GM12878 (cell line): ENCODE measurements at regions of chr12 and their contacts with region 1.

Region 1: DNA sequence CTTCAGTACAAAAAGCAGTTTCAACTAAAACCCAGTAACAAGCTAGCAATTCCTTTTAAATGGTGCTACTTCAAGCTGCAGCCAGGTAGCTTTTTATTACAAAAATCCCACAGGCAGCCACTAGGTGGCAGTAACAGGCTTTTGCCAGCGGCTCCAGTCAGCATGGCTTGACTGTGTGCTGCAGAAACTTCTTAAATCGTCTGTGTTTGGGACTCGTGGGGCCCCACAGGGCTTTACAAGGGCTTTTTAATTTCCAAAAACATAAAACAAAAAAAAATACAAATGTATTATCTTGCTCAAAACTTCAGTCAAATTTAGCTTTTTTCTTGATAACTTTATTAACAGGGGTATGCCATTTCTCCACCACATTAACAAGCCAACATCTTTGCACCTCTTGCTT is 3.6 kb upstream of the CLEC4E start:
- DNase-seq: peak; percentile 40
- ATAC-seq: peak; percentile 93
- H3K4me3 ChIP-seq: no peak overlapping the region
- H3K27ac ChIP-seq: no peak overlapping the region
- H3K4me1 ChIP-seq: no peaks in the 10 kb centered on the region
- H3K27me3 ChIP-seq: no peaks in the 10 kb centered on the region
- CTCF ChIP-seq: peak; percentile 74 to 87 (median 86)
- EP300 ChIP-seq: no peak
- POLR2A ChIP-seq: no peak
- RAD21 ChIP-seq: peak; percentile 93

Region 2: DNA sequence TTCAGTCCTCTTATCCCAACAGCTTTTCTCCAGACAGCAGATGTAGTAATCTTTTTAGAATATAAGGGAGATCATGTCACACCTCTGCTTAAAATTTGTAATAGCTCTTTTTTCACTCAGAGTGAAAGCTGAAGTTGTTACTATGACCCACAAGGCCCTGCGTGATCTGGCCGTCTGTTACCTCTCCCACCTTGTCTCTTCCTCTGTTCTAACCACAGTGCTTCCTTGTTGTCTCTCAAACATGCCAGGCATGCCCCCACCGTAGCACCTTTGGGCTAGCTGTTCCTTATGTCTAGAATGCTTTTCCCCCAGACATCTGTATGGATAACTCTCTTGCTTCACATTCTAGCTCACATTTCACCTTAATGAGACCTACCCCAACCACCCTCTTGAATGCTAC is 455.7 kb before region 1 on chr12:
- CTCF ChIA-PET with region 1: no interaction called
- POLR2A ChIA-PET with region 1: no interaction called
- RAD21 ChIA-PET with region 1: no interaction called
- SMC1A ChIA-PET with region 1: no interaction called
- in situ Hi-C with region 1: no loop called
- intact Hi-C with region 1: no loop called
- DNase-seq: no peak
- ATAC-seq: peak; percentile 84
- H3K4me3 ChIP-seq: peak overlapping the region; percentile 43
- H3K27ac ChIP-seq: peak overlapping the region; percentile 70
- H3K4me1 ChIP-seq: peaks cover 12% of the 10 kb centered on the region
- H3K27me3 ChIP-seq: no peaks in the 10 kb centered on the region
- CTCF ChIP-seq: no peak
- EP300 ChIP-seq: no peak
- POLR2A ChIP-seq: no peak
- RAD21 ChIP-seq: no peak

Region 3: GRCh38 chr12:8577879-8578278 is 33.6 kb after region 1 on chr12:
- CTCF ChIA-PET with region 1: interaction called, 11 read pairs
- POLR2A ChIA-PET with region 1: interaction called, 3 read pairs
- RAD21 ChIA-PET with region 1: no interaction called
- SMC1A ChIA-PET with region 1: interaction called, 5 read pairs
- in situ Hi-C with region 1: no loop called
- intact Hi-C with region 1: no loop called
- DNase-seq: no peak
- ATAC-seq: no peak
- H3K4me3 ChIP-seq: no peak overlapping the region
- H3K27ac ChIP-seq: no peak overlapping the region
- H3K4me1 ChIP-seq: no peaks in the 10 kb centered on the region
- H3K27me3 ChIP-seq: no peaks in the 10 kb centered on the region; a peak in 1 of 4 replicates
- CTCF ChIP-seq: no peak
- EP300 ChIP-seq: no peak
- POLR2A ChIP-seq: no peak
- RAD21 ChIP-seq: no peak

Region 4: GRCh38 chr12:8629486-8630033 is 85.3 kb after region 1 on chr12:
- CTCF ChIA-PET with region 1: interaction called, 22 read pairs
- POLR2A ChIA-PET with region 1: no interaction called
- RAD21 ChIA-PET with region 1: interaction called, 5 read pairs
- SMC1A ChIA-PET with region 1: interaction called, 13 read pairs
- in situ Hi-C with region 1: no loop called
- intact Hi-C with region 1: no loop called
- DNase-seq: peak; percentile 98
- ATAC-seq: peak; percentile 96
- H3K4me3 ChIP-seq: no peak overlapping the region
- H3K27ac ChIP-seq: peak overlapping the region; percentile 75
- H3K4me1 ChIP-seq: peaks cover 18% of the 10 kb centered on the region
- H3K27me3 ChIP-seq: no peaks in the 10 kb centered on the region
- CTCF ChIP-seq: no peak
- EP300 ChIP-seq: peak; percentile 91 to 98
- POLR2A ChIP-seq: no peak
- RAD21 ChIP-seq: peak; percentile 3; the same call in 1 of the 2 replicates

Region 5: GRCh38 chr12:8662593-8662992 is 118.3 kb after region 1 on chr12 and contains the start of gene MFAP5:
- CTCF ChIA-PET with region 1: interaction called, 46 read pairs
- POLR2A ChIA-PET with region 1: no interaction called
- RAD21 ChIA-PET with region 1: interaction called, 29 read pairs
- SMC1A ChIA-PET with region 1: interaction called, 30 read pairs
- in situ Hi-C with region 1: no loop called
- intact Hi-C with region 1: no loop called
- DNase-seq: no peak
- ATAC-seq: no peak
- H3K4me3 ChIP-seq: no peak within 1 kb of the TSS
- H3K27ac ChIP-seq: no peak within 1 kb of the TSS
- H3K4me1 ChIP-seq: no peaks in the 10 kb centered on the region
- H3K27me3 ChIP-seq: peaks cover 0 to 5% of the 10 kb centered on the region in 2 experiments; a peak in 2 of 4 replicates
- CTCF ChIP-seq: no peak
- EP300 ChIP-seq: no peak
- POLR2A ChIP-seq: no peak
- RAD21 ChIP-seq: no peak
- polyA plus RNA-seq, gene MFAP5: not detected

Region 6: GRCh38 chr12:8687846-8688601 is 143.7 kb after region 1 on chr12:
- CTCF ChIA-PET with region 1: interaction called, 6 read pairs
- POLR2A ChIA-PET with region 1: no interaction called
- RAD21 ChIA-PET with region 1: interaction called, 3 read pairs
- SMC1A ChIA-PET with region 1: interaction called, 8 read pairs
- in situ Hi-C with region 1: no loop called
- intact Hi-C with region 1: loop called (anchors 10 kb)
- DNase-seq: no peak
- ATAC-seq: no peak
- H3K4me3 ChIP-seq: no peak overlapping the region
- H3K27ac ChIP-seq: no peak overlapping the region
- H3K4me1 ChIP-seq: no peaks in the 10 kb centered on the region
- H3K27me3 ChIP-seq: peaks cover 0 to 3% of the 10 kb centered on the region in 2 experiments; a peak in 3 of 4 replicates
- CTCF ChIP-seq: no peak
- EP300 ChIP-seq: no peak
- POLR2A ChIP-seq: no peak
- RAD21 ChIP-seq: no peak

Region 7: GRCh38 chr12:8860165-8860961 is 316.1 kb after region 1 on chr12:
- CTCF ChIA-PET with region 1: interaction called, 35 read pairs
- POLR2A ChIA-PET with region 1: no interaction called
- RAD21 ChIA-PET with region 1: interaction called, 17 read pairs
- SMC1A ChIA-PET with region 1: interaction called, 21 read pairs
- in situ Hi-C with region 1: no loop called
- intact Hi-C with region 1: no loop called
- DNase-seq: no peak
- ATAC-seq: peak; percentile 60; the same call in 2 of the 3 replicates
- H3K4me3 ChIP-seq: no peak overlapping the region
- H3K27ac ChIP-seq: no peak overlapping the region
- H3K4me1 ChIP-seq: no peaks in the 10 kb centered on the region
- H3K27me3 ChIP-seq: 0 out of 4 replicates have a peak, but pooled peaks cover 0 to 3% of the 10 kb centered on the region in 2 experiments
- CTCF ChIP-seq: peak; percentile 51 to 67 (median 55)
- EP300 ChIP-seq: no peak
- POLR2A ChIP-seq: no peak
- RAD21 ChIP-seq: peak; percentile 63

Region 8: GRCh38 chr12:9049520-9050133 is 505.3 kb after region 1 on chr12:
- CTCF ChIA-PET with region 1: interaction called, 34 read pairs
- POLR2A ChIA-PET with region 1: no interaction called
- RAD21 ChIA-PET with region 1: interaction called, 10 read pairs
- SMC1A ChIA-PET with region 1: interaction called, 15 read pairs
- in situ Hi-C with region 1: no loop called
- intact Hi-C with region 1: loop called (anchors 10 kb)
- DNase-seq: no peak
- ATAC-seq: peak; percentile 74
- H3K4me3 ChIP-seq: no peak overlapping the region
- H3K27ac ChIP-seq: no peak overlapping the region
- H3K4me1 ChIP-seq: no peaks in the 10 kb centered on the region
- H3K27me3 ChIP-seq: peaks cover 0 to 3% of the 10 kb centered on the region in 2 experiments; a peak in 2 of 4 replicates
- CTCF ChIP-seq: peak; percentile 34 to 53 (median 50)
- EP300 ChIP-seq: no peak
- POLR2A ChIP-seq: no peak
- RAD21 ChIP-seq: peak; percentile 61